A673 (cell line): ENCODE measurements at regions of chr4 and their contacts with region 1.

Region 1: DNA sequence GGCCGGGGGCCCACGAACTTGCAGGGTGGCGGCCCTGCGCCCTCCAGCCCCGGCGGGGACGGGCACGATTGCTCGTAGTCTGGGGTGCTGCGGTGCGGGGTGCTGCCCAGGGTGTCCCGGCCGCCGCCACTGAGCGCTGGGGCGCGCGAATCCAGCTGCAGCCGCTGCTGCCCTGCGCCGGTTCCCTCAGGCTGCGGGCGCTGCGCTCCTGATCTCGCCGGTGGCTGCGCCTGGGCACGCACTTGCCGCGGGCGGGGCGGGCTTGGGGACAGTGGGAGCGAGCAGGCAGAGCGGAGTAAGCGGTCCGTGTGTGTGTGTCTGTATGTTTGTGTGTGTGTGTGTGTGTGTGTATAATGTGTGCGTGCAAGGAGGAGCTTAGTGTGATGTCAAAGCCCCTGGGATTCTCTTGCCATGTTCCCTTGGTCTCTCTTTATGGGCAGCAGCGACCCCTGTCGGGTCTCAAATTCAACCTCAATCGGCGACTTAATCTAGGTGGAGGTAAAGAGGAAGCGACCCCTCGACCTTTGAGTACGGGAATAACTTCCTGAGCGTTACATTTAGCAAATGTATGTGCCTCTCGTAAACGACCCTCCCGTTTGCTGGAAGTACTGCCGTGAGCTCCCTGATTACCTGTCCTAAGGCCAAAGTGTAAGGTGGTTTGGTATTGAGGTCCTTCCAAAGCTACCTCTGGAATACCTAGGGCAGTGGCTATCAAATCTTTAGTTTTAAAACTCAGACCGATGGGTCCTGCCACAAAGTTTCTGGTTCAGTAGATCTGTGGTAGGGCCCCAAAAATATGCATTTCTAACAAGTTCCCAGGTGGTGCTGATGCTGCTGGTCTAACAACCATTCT is at the start of gene RNF150:
- DNase-seq: peak; percentile 88
- H3K4me3 ChIP-seq: peak within 1 kb of the TSS; percentile 77
- H3K27ac ChIP-seq: no peak within 1 kb of the TSS
- H3K4me1 ChIP-seq: no peaks in the 10 kb centered on the region
- H3K27me3 ChIP-seq: peaks cover 47% of the 10 kb centered on the region
- CTCF ChIP-seq: peak; percentile 80
- total RNA-seq, gene RNF150: 2.7 and 3.8 TPM in 2 replicates

Region 2: GRCh38 chr4:140861359-140862176 is 271.8 kb before region 1 on chr4:
- CTCF ChIA-PET with region 1: interaction called, 8 read pairs
- POLR2A ChIA-PET with region 1: no interaction called
- intact Hi-C with region 1: loop called (anchors 1 kb)
- DNase-seq: peak; percentile 77
- H3K4me3 ChIP-seq: no peak overlapping the region
- H3K27ac ChIP-seq: no peak overlapping the region
- H3K4me1 ChIP-seq: peaks cover 5% of the 10 kb centered on the region
- H3K27me3 ChIP-seq: no peaks in the 10 kb centered on the region
- CTCF ChIP-seq: peak; percentile 86

Region 3: DNA sequence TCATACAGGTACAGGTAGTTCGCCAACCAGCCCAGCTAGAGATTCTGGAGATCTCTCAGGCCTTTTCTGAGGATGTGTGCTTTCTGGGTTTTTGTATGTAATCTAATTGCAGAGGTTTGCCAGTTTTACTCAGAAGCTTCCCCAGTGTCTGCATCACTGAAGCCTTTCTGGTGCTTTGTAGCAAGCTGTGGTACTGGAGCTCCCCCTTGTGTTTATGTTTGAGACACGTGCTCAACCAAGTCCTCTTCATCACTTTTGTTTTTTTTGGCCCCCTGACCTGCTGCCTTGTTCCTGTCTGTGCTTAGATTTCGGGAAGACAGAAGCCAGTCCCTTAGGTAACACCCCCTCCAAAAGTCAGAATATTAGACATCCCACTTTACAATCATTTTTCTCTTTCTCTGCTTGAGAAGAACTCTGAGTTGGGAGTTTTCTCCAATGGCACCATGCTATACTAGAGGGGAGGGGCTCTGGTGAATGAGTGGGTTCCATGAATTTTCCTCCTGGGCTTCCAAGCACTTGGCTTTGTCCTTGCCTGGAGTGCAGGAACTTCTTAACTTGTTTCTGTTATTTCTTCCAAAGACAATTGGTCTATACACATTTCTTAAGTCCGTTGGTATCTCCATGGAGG is 248.8 kb before region 1 on chr4:
- CTCF ChIA-PET with region 1: interaction called, 7 read pairs
- POLR2A ChIA-PET with region 1: no interaction called
- intact Hi-C with region 1: loop called (anchors 5 kb)
- DNase-seq: peak; percentile 78
- H3K4me3 ChIP-seq: no peak overlapping the region
- H3K27ac ChIP-seq: no peak overlapping the region
- H3K4me1 ChIP-seq: no peaks in the 10 kb centered on the region
- H3K27me3 ChIP-seq: no peaks in the 10 kb centered on the region
- CTCF ChIP-seq: peak; percentile 85

Region 4: GRCh38 chr4:140906993-140907962 is 226.1 kb before region 1 on chr4:
- CTCF ChIA-PET with region 1: no interaction called
- POLR2A ChIA-PET with region 1: no interaction called
- intact Hi-C with region 1: no loop called
- DNase-seq: no peak
- H3K4me3 ChIP-seq: no peak overlapping the region
- H3K27ac ChIP-seq: no peak overlapping the region
- H3K4me1 ChIP-seq: peaks cover 10% of the 10 kb centered on the region
- H3K27me3 ChIP-seq: no peaks in the 10 kb centered on the region
- CTCF ChIP-seq: no peak

Region 5: GRCh38 chr4:140996766-140997165 is 136.6 kb before region 1 on chr4:
- CTCF ChIA-PET with region 1: no interaction called
- POLR2A ChIA-PET with region 1: no interaction called
- intact Hi-C with region 1: loop called (anchors 5 kb)
- DNase-seq: peak; percentile 21
- H3K4me3 ChIP-seq: no peak overlapping the region
- H3K27ac ChIP-seq: no peak overlapping the region
- H3K4me1 ChIP-seq: no peaks in the 10 kb centered on the region
- H3K27me3 ChIP-seq: no peaks in the 10 kb centered on the region
- CTCF ChIP-seq: peak; percentile 42

Region 6: GRCh38 chr4:141074098-141074878 is 59.1 kb before region 1 on chr4:
- CTCF ChIA-PET with region 1: no interaction called
- POLR2A ChIA-PET with region 1: no interaction called
- intact Hi-C with region 1: no loop called
- DNase-seq: no peak
- H3K4me3 ChIP-seq: no peak overlapping the region
- H3K27ac ChIP-seq: no peak overlapping the region
- H3K4me1 ChIP-seq: no peaks in the 10 kb centered on the region
- H3K27me3 ChIP-seq: no peaks in the 10 kb centered on the region
- CTCF ChIP-seq: no peak

Region 7: GRCh38 chr4:141657553-141658250 is 524.3 kb after region 1 on chr4:
- CTCF ChIA-PET with region 1: no interaction called
- POLR2A ChIA-PET with region 1: no interaction called
- intact Hi-C with region 1: no loop called
- DNase-seq: no peak
- H3K4me3 ChIP-seq: no peak overlapping the region
- H3K27ac ChIP-seq: no peak overlapping the region
- H3K4me1 ChIP-seq: no peaks in the 10 kb centered on the region
- H3K27me3 ChIP-seq: no peaks in the 10 kb centered on the region
- CTCF ChIP-seq: no peak